GM12878 (cell line): ENCODE measurements at regions of chr16 and their contacts with region 1.

Region 1: DNA sequence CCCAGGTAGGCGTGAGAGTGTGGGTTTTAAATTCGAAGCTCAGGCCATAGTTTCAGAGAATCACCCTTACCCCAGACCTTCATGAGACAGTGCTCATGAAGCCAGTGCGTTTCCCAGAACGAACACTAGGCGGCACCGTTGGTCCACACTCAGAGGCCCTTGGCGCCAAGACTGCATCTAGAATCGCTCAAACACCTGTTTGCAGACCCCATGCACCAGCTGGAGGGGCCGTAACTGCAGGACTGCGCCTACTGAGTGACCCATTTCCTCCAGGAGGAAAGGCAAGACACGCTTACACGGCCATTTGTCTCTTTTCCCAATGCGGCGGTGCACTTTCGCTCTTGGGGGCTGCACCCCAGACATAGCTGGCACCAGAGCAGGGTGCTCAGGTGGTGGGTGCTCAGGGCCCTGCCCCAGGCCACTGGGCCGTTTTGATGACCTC is 34.0 kb downstream of the ADGRG5 start:
- DNase-seq: peak; percentile 26
- ATAC-seq: peak; percentile 95
- H3K4me3 ChIP-seq: no peak overlapping the region
- H3K27ac ChIP-seq: no peak overlapping the region
- H3K4me1 ChIP-seq: no peaks in the 10 kb centered on the region
- H3K27me3 ChIP-seq: no peaks in the 10 kb centered on the region
- CTCF ChIP-seq: peak; percentile 98 to 100 (median 99); a peak in 5 of 6 replicates
- EP300 ChIP-seq: no peak
- POLR2A ChIP-seq: peak; percentile 60
- RAD21 ChIP-seq: peak; percentile 97

Region 2: GRCh38 chr16:57535680-57536305 is 40.7 kb before region 1 on chr16:
- CTCF ChIA-PET with region 1: interaction called, 5 read pairs
- POLR2A ChIA-PET with region 1: no interaction called
- RAD21 ChIA-PET with region 1: interaction called, 3 read pairs
- SMC1A ChIA-PET with region 1: interaction called, 13 read pairs
- in situ Hi-C with region 1: no loop called
- intact Hi-C with region 1: no loop called
- DNase-seq: no peak
- ATAC-seq: peak; percentile 82
- H3K4me3 ChIP-seq: peak overlapping the region; percentile 88
- H3K27ac ChIP-seq: peak overlapping the region; percentile 85
- H3K4me1 ChIP-seq: peaks cover 63% of the 10 kb centered on the region
- H3K27me3 ChIP-seq: no peaks in the 10 kb centered on the region
- CTCF ChIP-seq: 0 out of 6 replicates have a peak, but pooled peaks of 2 of the 3 experiments have one; percentile 16 to 24
- EP300 ChIP-seq: no peak
- POLR2A ChIP-seq: no peak
- RAD21 ChIP-seq: no peak

Region 3: GRCh38 chr16:57555831-57556230 is 20.6 kb before region 1 on chr16:
- CTCF ChIA-PET with region 1: interaction called, 25 read pairs
- POLR2A ChIA-PET with region 1: no interaction called
- RAD21 ChIA-PET with region 1: no interaction called
- SMC1A ChIA-PET with region 1: interaction called, 7 read pairs
- in situ Hi-C with region 1: no loop called
- intact Hi-C with region 1: no loop called
- DNase-seq: no peak
- ATAC-seq: no peak
- H3K4me3 ChIP-seq: no peak overlapping the region
- H3K27ac ChIP-seq: no peak overlapping the region
- H3K4me1 ChIP-seq: no peaks in the 10 kb centered on the region
- H3K27me3 ChIP-seq: no peaks in the 10 kb centered on the region
- CTCF ChIP-seq: no peak
- EP300 ChIP-seq: no peak
- POLR2A ChIP-seq: no peak
- RAD21 ChIP-seq: no peak

Region 4: GRCh38 chr16:57591086-57591869 is 14.8 kb after region 1 on chr16:
- CTCF ChIA-PET with region 1: interaction called, 19 read pairs
- POLR2A ChIA-PET with region 1: interaction called, 3 read pairs
- RAD21 ChIA-PET with region 1: interaction called, 32 read pairs
- SMC1A ChIA-PET with region 1: interaction called, 30 read pairs
- in situ Hi-C with region 1: no loop called
- intact Hi-C with region 1: no loop called
- DNase-seq: no peak
- ATAC-seq: peak; percentile 88
- H3K4me3 ChIP-seq: no peak overlapping the region
- H3K27ac ChIP-seq: no peak overlapping the region
- H3K4me1 ChIP-seq: peaks cover 23% of the 10 kb centered on the region
- H3K27me3 ChIP-seq: no peaks in the 10 kb centered on the region
- CTCF ChIP-seq: peak; percentile 91 to 94 (median 94)
- EP300 ChIP-seq: peak; percentile 62 to 68; a peak in 2 of 4 replicates
- POLR2A ChIP-seq: 0 out of 2 replicates have a peak, but pooled peaks have one; percentile 27
- RAD21 ChIP-seq: peak; percentile 76

Region 5: DNA sequence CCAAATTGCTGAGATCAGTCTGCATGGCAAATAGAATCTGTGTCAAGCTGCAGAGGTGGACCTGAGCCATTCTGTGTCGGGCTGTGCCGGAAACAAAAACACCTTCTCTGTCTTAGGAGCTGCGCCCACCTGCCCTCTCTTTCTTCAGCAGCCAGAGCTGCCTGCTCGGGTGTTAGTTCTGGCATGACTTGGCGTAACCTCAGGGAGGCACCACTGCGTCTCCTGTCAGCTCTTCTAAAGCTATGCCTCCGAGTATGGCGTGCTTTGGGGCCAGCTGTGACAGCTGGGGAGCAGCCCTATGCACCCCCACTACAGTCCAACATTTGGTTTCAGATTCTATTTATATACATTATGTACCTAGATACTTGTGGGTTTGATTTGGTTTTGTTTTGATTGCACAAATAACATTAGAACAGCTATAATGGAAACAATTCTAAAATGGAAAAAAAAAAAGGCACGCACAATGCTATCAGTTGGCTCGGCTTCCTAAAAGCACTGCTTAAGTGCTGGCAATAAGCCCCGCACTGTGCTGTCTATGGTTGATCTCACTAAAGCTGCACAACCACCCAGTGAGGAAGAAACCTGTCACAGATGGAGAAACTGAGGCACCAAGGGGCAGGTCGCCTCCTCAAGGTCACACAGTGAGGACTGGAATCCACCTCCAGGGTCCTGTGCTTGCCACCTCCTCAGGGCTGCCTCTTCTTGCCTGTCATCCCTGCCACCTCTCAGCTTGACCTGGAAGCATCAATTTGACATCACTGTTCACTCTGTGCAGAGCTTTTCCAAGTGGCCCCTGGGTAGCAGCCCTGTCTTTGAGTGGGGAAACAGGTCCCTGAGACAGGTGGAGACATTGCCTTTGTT is 33.3 kb after region 1 on chr16:
- CTCF ChIA-PET with region 1: interaction called, 17 read pairs
- POLR2A ChIA-PET with region 1: no interaction called
- RAD21 ChIA-PET with region 1: interaction called, 18 read pairs
- SMC1A ChIA-PET with region 1: interaction called, 17 read pairs
- in situ Hi-C with region 1: no loop called
- intact Hi-C with region 1: no loop called
- DNase-seq: peak; percentile 83
- ATAC-seq: peak; percentile 92
- H3K4me3 ChIP-seq: peak overlapping the region; percentile 30; the same call in 1 of the 2 replicates
- H3K27ac ChIP-seq: peak overlapping the region; percentile 87
- H3K4me1 ChIP-seq: peaks cover 37% of the 10 kb centered on the region
- H3K27me3 ChIP-seq: no peaks in the 10 kb centered on the region
- CTCF ChIP-seq: peak; percentile 40 to 55 (median 41); a peak in 4 of 6 replicates
- EP300 ChIP-seq: peak; percentile 90 to 99; a peak in 3 of 4 replicates
- POLR2A ChIP-seq: peak; percentile 42; the same call in 1 of the 2 replicates
- RAD21 ChIP-seq: peak; percentile 67

Region 6: DNA sequence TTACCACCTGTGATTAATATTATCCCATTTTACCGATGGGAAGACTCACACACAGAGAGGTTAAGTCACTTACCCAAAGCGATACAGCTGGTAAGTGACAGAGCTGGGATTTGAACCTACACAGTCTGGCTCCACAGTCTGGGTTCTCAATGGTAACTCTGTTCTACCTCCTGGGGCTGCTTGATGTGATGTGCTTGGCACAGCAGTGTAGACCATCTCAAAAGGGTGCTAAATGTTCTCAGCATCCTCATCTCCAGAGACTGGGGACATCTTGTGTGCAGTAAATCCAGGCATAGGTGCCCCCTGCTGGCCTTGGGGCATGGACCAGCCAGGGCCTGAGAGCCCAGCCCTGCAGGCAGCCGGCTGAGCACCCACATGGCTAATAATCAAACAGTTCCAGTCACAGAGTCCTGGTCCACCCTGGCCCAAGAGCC is 143.7 kb after region 1 on chr16:
- CTCF ChIA-PET with region 1: interaction called, 5 read pairs
- POLR2A ChIA-PET with region 1: no interaction called
- RAD21 ChIA-PET with region 1: interaction called, 4 read pairs
- SMC1A ChIA-PET with region 1: no interaction called
- in situ Hi-C with region 1: no loop called
- intact Hi-C with region 1: loop called (anchors 1 kb)
- DNase-seq: no peak
- ATAC-seq: peak; percentile 96
- H3K4me3 ChIP-seq: no peak overlapping the region
- H3K27ac ChIP-seq: no peak overlapping the region
- H3K4me1 ChIP-seq: no peaks in the 10 kb centered on the region
- H3K27me3 ChIP-seq: peaks cover 0 to 2% of the 10 kb centered on the region in 2 experiments; a peak in 2 of 4 replicates
- CTCF ChIP-seq: peak; percentile 49 to 68 (median 60)
- EP300 ChIP-seq: no peak
- POLR2A ChIP-seq: no peak
- RAD21 ChIP-seq: peak; percentile 60

Region 7: GRCh38 chr16:57906382-57907316 is 330.2 kb after region 1 on chr16:
- CTCF ChIA-PET with region 1: no interaction called
- POLR2A ChIA-PET with region 1: no interaction called
- RAD21 ChIA-PET with region 1: no interaction called
- SMC1A ChIA-PET with region 1: no interaction called
- in situ Hi-C with region 1: no loop called
- intact Hi-C with region 1: no loop called
- DNase-seq: no peak
- ATAC-seq: peak; percentile 78
- H3K4me3 ChIP-seq: no peak overlapping the region
- H3K27ac ChIP-seq: no peak overlapping the region
- H3K4me1 ChIP-seq: no peaks in the 10 kb centered on the region
- H3K27me3 ChIP-seq: no peaks in the 10 kb centered on the region; a peak in 2 of 4 replicates
- CTCF ChIP-seq: peak; percentile 36 to 45 (median 38); a peak in 5 of 6 replicates
- EP300 ChIP-seq: no peak
- POLR2A ChIP-seq: no peak
- RAD21 ChIP-seq: 0 out of 2 replicates have a peak, but pooled peaks have one; percentile 33

Region 8: GRCh38 chr16:58009856-58010416 is 433.5 kb after region 1 on chr16:
- CTCF ChIA-PET with region 1: no interaction called
- POLR2A ChIA-PET with region 1: no interaction called
- RAD21 ChIA-PET with region 1: no interaction called
- SMC1A ChIA-PET with region 1: no interaction called
- in situ Hi-C with region 1: loop called (anchors 10 kb)
- intact Hi-C with region 1: loop called (anchors 5 kb)
- DNase-seq: no peak
- ATAC-seq: no peak
- H3K4me3 ChIP-seq: no peak overlapping the region
- H3K27ac ChIP-seq: no peak overlapping the region
- H3K4me1 ChIP-seq: no peaks in the 10 kb centered on the region
- H3K27me3 ChIP-seq: no peaks in the 10 kb centered on the region
- CTCF ChIP-seq: no peak
- EP300 ChIP-seq: no peak
- POLR2A ChIP-seq: no peak
- RAD21 ChIP-seq: no peak